GM12878 (cell line): ENCODE measurements at regions of chr2 and their contacts with region 1.

Region 1: GRCh38 chr2:239035361-239036078 is 187.6 kb downstream of the TWIST2 start:
- DNase-seq: no peak
- ATAC-seq: peak; percentile 98
- H3K4me3 ChIP-seq: no peak overlapping the region
- H3K27ac ChIP-seq: no peak overlapping the region
- H3K4me1 ChIP-seq: no peaks in the 10 kb centered on the region
- H3K27me3 ChIP-seq: no peaks in the 10 kb centered on the region; a peak in 1 of 4 replicates
- CTCF ChIP-seq: peak; percentile 58 to 91 (median 76)
- EP300 ChIP-seq: no peak
- POLR2A ChIP-seq: no peak
- RAD21 ChIP-seq: peak; percentile 77

Region 2: GRCh38 chr2:237904801-237905599 is 1130.5 kb before region 1 on chr2:
- CTCF ChIA-PET with region 1: no interaction called
- POLR2A ChIA-PET with region 1: no interaction called
- RAD21 ChIA-PET with region 1: no interaction called
- SMC1A ChIA-PET with region 1: no interaction called
- in situ Hi-C with region 1: no loop called
- intact Hi-C with region 1: no loop called
- DNase-seq: peak; percentile 53
- ATAC-seq: peak; percentile 79
- H3K4me3 ChIP-seq: no peak overlapping the region
- H3K27ac ChIP-seq: peak overlapping the region; percentile 74
- H3K4me1 ChIP-seq: peaks cover 15% of the 10 kb centered on the region
- H3K27me3 ChIP-seq: no peaks in the 10 kb centered on the region
- CTCF ChIP-seq: no peak
- EP300 ChIP-seq: peak; percentile 74 to 76; a peak in 2 of 4 replicates
- POLR2A ChIP-seq: no peak
- RAD21 ChIP-seq: no peak

Region 3: GRCh38 chr2:238821391-238821790 is 214.1 kb before region 1 on chr2:
- CTCF ChIA-PET with region 1: no interaction called
- POLR2A ChIA-PET with region 1: no interaction called
- RAD21 ChIA-PET with region 1: no interaction called
- SMC1A ChIA-PET with region 1: no interaction called
- in situ Hi-C with region 1: no loop called
- intact Hi-C with region 1: no loop called
- DNase-seq: no peak
- ATAC-seq: no peak
- H3K4me3 ChIP-seq: no peak overlapping the region
- H3K27ac ChIP-seq: no peak overlapping the region
- H3K4me1 ChIP-seq: no peaks in the 10 kb centered on the region
- H3K27me3 ChIP-seq: no peaks in the 10 kb centered on the region
- CTCF ChIP-seq: no peak
- EP300 ChIP-seq: no peak
- POLR2A ChIP-seq: no peak
- RAD21 ChIP-seq: no peak

Region 4: GRCh38 chr2:238868616-238869292 is 166.8 kb before region 1 on chr2:
- CTCF ChIA-PET with region 1: no interaction called
- POLR2A ChIA-PET with region 1: no interaction called
- RAD21 ChIA-PET with region 1: no interaction called
- SMC1A ChIA-PET with region 1: no interaction called
- in situ Hi-C with region 1: no loop called
- intact Hi-C with region 1: no loop called
- DNase-seq: no peak
- ATAC-seq: no peak
- H3K4me3 ChIP-seq: no peak overlapping the region
- H3K27ac ChIP-seq: no peak overlapping the region
- H3K4me1 ChIP-seq: no peaks in the 10 kb centered on the region
- H3K27me3 ChIP-seq: no peaks in the 10 kb centered on the region
- CTCF ChIP-seq: no peak
- EP300 ChIP-seq: no peak
- POLR2A ChIP-seq: no peak
- RAD21 ChIP-seq: no peak

Region 5: GRCh38 chr2:239882331-239882732 is 846.8 kb after region 1 on chr2:
- CTCF ChIA-PET with region 1: no interaction called
- POLR2A ChIA-PET with region 1: no interaction called
- RAD21 ChIA-PET with region 1: no interaction called
- SMC1A ChIA-PET with region 1: no interaction called
- in situ Hi-C with region 1: loop called (anchors 10 kb)
- intact Hi-C with region 1: loop called (anchors 5 kb)
- DNase-seq: no peak
- ATAC-seq: peak; percentile 68; the same call in 2 of the 3 replicates
- H3K4me3 ChIP-seq: no peak overlapping the region
- H3K27ac ChIP-seq: no peak overlapping the region
- H3K4me1 ChIP-seq: no peaks in the 10 kb centered on the region
- H3K27me3 ChIP-seq: no peaks in the 10 kb centered on the region; a peak in 1 of 4 replicates
- CTCF ChIP-seq: peak; percentile 48 to 59 (median 58); a peak in 5 of 6 replicates
- EP300 ChIP-seq: no peak
- POLR2A ChIP-seq: no peak
- RAD21 ChIP-seq: peak; percentile 48

Region 6: GRCh38 chr2:240143801-240144648 is 1108.5 kb after region 1 on chr2:
- CTCF ChIA-PET with region 1: no interaction called
- POLR2A ChIA-PET with region 1: no interaction called
- RAD21 ChIA-PET with region 1: no interaction called
- SMC1A ChIA-PET with region 1: no interaction called
- in situ Hi-C with region 1: loop called (anchors 10 kb)
- intact Hi-C with region 1: loop called (anchors 10 kb)
- DNase-seq: no peak
- ATAC-seq: peak; percentile 98
- H3K4me3 ChIP-seq: no peak overlapping the region
- H3K27ac ChIP-seq: no peak overlapping the region
- H3K4me1 ChIP-seq: no peaks in the 10 kb centered on the region
- H3K27me3 ChIP-seq: peaks cover 0 to 2% of the 10 kb centered on the region in 2 experiments; a peak in 2 of 4 replicates
- CTCF ChIP-seq: peak; percentile 80 to 94 (median 91)
- EP300 ChIP-seq: no peak
- POLR2A ChIP-seq: no peak
- RAD21 ChIP-seq: peak; percentile 93